ENCODE measurements at regions of chr12 and their contacts with region 1.

Region 1: DNA sequence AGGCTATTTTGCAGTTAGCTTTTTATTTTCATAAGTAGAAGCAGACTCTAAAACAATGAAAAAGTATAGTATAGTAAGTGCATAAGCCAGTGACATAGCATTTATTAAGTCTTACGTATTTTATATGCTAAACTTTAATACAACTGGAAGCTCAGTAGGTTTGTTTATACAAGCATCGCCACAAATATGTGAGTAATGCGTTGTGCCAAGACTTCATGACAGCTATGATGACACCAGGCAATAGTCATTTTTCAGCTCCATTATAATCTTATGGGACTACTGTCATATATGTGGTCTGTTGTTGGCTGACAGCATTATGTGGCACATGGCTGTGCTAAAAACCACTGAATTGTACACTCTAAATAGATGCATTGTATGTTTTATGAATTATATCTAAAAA is 40.3 kb downstream of the SLC38A2 start:
- DNase-seq: no peak
- ATAC-seq: no peak

Region 2: DNA sequence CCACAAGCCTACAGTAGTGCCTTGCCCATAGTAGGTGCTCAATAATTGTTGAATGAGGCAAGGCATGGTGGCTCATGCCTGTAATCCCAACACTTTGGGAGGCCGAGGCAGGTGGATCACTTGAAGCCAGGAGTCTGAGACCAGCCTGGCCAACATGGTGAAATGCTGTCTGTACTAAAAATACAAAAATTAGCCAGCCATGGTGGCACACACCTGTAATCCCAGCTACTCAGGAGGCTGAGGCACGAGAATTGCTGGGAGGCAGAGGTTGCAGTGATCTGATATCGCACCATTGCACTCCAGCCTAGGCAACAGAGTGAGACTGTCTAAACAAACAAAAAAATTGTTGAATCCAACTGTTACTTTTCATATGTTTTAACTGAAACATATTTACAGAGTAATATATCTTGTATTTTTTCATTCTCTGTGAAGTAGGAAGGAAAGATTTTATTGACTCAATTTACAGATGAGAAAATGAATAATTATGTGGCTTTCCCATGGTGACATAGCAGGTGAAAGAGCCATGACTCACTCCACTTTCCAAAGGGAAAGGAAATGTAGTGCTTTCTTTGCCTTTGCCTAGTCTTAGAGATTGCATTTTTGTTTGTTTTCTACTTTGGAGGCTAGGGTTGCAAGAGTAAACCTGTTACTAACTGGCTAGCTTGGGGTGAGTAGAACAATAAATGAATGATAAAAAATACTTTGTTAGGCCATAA is 588.9 kb after region 1 on chr12:
- intact Hi-C with region 1: loop called (anchors 10 kb)
- DNase-seq: no peak
- ATAC-seq: no peak